PC-9 (cell line): ENCODE measurements at regions of chr10 and their contacts with region 1.

Region 1: DNA sequence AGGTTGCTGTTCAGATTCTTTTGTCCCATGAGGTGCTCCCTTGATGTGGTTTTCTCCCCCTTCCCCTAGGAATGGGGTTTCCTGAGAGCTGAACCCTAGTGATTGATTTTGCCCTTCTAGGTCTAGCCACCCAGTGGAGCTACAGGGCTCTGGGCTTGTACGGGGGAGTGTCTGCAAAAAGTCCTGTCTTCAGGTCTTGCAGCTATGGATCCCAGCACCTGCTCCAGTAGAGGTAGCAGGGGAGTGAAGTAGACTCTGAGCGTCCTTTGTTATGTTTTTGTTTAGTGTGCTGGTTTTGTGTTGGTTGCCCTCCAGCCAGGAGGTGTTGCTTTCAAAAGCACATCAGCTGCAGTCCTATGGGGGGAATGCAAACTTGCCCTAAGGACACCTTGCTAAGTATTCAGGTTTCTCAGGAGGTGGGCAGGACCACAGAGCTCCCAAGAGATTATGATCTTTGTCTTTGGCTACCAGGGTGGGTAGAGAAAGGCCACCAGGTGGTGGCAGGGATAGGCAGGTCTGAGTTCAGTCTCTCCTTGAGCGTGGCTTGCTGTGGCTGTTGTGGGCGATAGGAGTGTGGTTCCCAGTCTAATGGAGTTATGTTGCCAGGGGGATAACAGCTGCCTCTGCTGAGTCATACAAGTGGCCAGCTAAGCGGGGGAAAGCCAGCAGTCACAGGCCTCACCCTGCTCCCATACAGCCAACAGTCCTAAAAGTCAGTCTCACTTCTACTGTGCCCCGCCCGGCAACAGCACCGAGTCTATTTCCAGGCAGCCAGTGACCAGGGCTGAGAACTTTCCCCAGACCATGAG is 92.4 kb upstream of the JCAD start:
- DNase-seq: peak; percentile 80 to 84
- H3K4me3 ChIP-seq: no peak overlapping the region
- H3K27ac ChIP-seq: no peak overlapping the region
- H3K4me1 ChIP-seq: peaks cover 11% of the 10 kb centered on the region
- H3K27me3 ChIP-seq: no peaks in the 10 kb centered on the region
- CTCF ChIP-seq: no peak; the same call in 1 of the 2 replicates

Region 2: GRCh38 chr10:29980084-29980483 is 171.7 kb before region 1 on chr10:
- CTCF ChIA-PET with region 1: no interaction called
- POLR2A ChIA-PET with region 1: no interaction called
- intact Hi-C with region 1: no loop called
- DNase-seq: no peak
- H3K4me3 ChIP-seq: no peak overlapping the region
- H3K27ac ChIP-seq: no peak overlapping the region
- H3K4me1 ChIP-seq: no peaks in the 10 kb centered on the region
- H3K27me3 ChIP-seq: no peaks in the 10 kb centered on the region
- CTCF ChIP-seq: no peak

Region 3: DNA sequence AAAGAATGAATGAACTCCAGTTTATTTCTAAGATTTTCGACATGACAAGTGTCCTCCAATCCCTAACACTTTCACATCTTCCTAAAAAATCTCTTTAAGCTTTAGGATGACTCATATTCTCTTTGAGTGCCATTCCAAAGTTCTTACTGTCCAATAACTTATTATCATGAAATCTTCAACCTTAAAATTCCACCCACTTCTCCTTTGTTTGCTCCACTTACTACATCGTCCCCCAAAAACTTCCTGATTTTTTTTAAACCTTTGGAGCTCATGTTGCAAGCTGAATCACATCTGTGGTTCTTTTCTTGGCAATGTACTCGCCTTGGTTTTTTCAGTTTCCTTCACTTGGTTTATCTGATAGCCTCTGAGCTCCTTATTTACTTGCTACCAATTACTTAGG is 53.2 kb before region 1 on chr10:
- CTCF ChIA-PET with region 1: interaction called, 4 read pairs
- POLR2A ChIA-PET with region 1: no interaction called
- intact Hi-C with region 1: loop called (anchors 5 kb)
- DNase-seq: peak; percentile 38 to 92
- H3K4me3 ChIP-seq: no peak overlapping the region
- H3K27ac ChIP-seq: peak overlapping the region; percentile 77
- H3K4me1 ChIP-seq: peaks cover 43% of the 10 kb centered on the region
- H3K27me3 ChIP-seq: no peaks in the 10 kb centered on the region
- CTCF ChIP-seq: no peak